PC-3 (cell line): ENCODE measurements at regions of chr17 and their contacts with region 1.

Region 1: GRCh38 chr17:13002766-13003451 is 14.9 kb downstream of the ELAC2 start:
- DNase-seq: peak; percentile 83
- ATAC-seq: peak; percentile 83
- H3K4me3 ChIP-seq: no peak overlapping the region
- H3K27ac ChIP-seq: no peak overlapping the region
- H3K4me1 ChIP-seq: peaks cover 9% of the 10 kb centered on the region; the same call in 1 of the 2 replicates
- H3K27me3 ChIP-seq: no peaks in the 10 kb centered on the region
- CTCF ChIP-seq: peak; percentile 98

Region 2: GRCh38 chr17:12180644-12181261 is 822.2 kb before region 1 on chr17:
- CTCF ChIA-PET with region 1: no interaction called
- POLR2A ChIA-PET with region 1: no interaction called
- intact Hi-C with region 1: loop called (anchors 5 kb)
- DNase-seq: peak; percentile 74
- ATAC-seq: peak; percentile 43; the same call in 1 of the 2 replicates
- H3K4me3 ChIP-seq: peak overlapping the region; percentile 33; the same call in 1 of the 2 replicates
- H3K27ac ChIP-seq: no peak overlapping the region
- H3K4me1 ChIP-seq: no peaks in the 10 kb centered on the region
- H3K27me3 ChIP-seq: peaks cover 5% of the 10 kb centered on the region; the same call in 1 of the 2 replicates
- CTCF ChIP-seq: peak; percentile 98

Region 3: GRCh38 chr17:12256380-12256995 is 746.4 kb before region 1 on chr17:
- CTCF ChIA-PET with region 1: no interaction called
- POLR2A ChIA-PET with region 1: no interaction called
- intact Hi-C with region 1: loop called (anchors 5 kb)
- DNase-seq: peak; percentile 69
- ATAC-seq: 0 out of 2 replicates have a peak, but pooled peaks have one; percentile 27
- H3K4me3 ChIP-seq: no peak overlapping the region
- H3K27ac ChIP-seq: no peak overlapping the region
- H3K4me1 ChIP-seq: no peaks in the 10 kb centered on the region
- H3K27me3 ChIP-seq: peaks cover 44% of the 10 kb centered on the region
- CTCF ChIP-seq: peak; percentile 94

Region 4: DNA sequence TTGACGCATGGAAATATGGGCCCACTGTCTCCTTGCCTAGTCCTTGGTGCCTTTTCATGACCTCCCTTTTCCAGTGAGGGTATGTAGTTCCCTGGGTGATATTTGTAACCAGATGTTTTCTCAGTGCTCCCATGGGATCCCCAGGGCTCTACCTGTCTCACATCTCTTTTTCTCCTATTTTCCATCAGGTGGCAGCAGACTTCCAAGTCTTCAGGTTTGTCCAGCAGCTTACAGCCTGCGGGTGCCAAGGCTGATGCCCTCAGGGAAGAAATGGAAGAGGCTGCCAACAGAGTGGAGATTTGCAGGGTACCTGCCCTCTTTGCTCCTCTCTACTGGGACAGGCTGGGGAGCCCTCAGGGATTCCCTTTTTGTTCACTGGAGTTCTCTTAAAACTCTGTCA is 74.2 kb before region 1 on chr17:
- CTCF ChIA-PET with region 1: no interaction called
- POLR2A ChIA-PET with region 1: no interaction called
- intact Hi-C with region 1: loop called (anchors 2 kb)
- DNase-seq: peak; percentile 44
- ATAC-seq: no peak; the same call in 1 of the 2 replicates
- H3K4me3 ChIP-seq: no peak overlapping the region
- H3K27ac ChIP-seq: no peak overlapping the region
- H3K4me1 ChIP-seq: no peaks in the 10 kb centered on the region
- H3K27me3 ChIP-seq: peaks cover 21% of the 10 kb centered on the region
- CTCF ChIP-seq: peak; percentile 71